Cardiac septum (tissue), 1 donor: ENCODE measurements at regions of chr1 and their contacts with region 1.

Region 1: GRCh38 chr1:46616277-46617107 is at the start of gene MOB3C:
- DNase-seq: peak; percentile 94
- total RNA-seq, gene MOB3C: 14.9 TPM

Region 2: DNA sequence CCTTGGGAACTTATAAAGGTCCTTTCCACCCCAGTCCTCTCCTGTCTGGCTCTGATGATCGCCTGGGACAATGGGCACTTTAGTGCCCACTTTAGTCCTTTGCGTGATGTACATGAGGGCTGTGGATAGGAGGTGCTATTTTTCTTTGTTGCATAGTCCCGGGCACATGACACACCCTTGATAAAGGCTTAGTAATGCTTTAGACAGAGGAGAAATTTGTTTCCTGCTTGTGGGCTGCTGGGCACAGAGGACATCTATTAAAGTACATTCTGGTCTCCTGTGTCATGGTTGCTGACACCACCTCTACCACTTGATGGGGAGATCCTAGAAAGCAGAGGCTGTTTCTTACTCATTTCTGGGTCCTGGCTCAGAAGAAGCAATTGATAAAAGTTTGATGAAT is 59.7 kb before region 1 on chr1:
- intact Hi-C with region 1: no loop called
- DNase-seq: no peak

Region 3: DNA sequence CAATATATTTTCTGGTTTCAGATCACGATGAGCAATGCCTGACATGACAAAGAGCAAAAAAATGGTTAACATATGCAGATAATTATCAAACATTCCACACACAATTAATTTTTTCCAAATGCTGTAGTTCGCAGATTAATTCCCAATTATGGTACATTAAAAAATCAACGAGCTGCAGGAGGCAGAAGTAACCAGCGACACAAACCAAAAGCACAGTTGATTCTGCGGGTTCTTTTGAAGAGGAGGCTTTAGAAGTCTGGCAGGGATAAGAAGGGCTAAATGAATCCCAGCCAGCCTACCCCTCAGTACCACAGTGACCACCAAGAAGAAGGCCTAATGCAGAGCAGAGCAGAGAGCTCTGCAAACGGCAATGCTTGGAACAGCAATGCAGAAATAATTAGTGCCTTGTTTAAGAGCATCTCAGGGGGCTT is 48.0 kb before region 1 on chr1:
- intact Hi-C with region 1: no loop called
- DNase-seq: no peak

Region 4: DNA sequence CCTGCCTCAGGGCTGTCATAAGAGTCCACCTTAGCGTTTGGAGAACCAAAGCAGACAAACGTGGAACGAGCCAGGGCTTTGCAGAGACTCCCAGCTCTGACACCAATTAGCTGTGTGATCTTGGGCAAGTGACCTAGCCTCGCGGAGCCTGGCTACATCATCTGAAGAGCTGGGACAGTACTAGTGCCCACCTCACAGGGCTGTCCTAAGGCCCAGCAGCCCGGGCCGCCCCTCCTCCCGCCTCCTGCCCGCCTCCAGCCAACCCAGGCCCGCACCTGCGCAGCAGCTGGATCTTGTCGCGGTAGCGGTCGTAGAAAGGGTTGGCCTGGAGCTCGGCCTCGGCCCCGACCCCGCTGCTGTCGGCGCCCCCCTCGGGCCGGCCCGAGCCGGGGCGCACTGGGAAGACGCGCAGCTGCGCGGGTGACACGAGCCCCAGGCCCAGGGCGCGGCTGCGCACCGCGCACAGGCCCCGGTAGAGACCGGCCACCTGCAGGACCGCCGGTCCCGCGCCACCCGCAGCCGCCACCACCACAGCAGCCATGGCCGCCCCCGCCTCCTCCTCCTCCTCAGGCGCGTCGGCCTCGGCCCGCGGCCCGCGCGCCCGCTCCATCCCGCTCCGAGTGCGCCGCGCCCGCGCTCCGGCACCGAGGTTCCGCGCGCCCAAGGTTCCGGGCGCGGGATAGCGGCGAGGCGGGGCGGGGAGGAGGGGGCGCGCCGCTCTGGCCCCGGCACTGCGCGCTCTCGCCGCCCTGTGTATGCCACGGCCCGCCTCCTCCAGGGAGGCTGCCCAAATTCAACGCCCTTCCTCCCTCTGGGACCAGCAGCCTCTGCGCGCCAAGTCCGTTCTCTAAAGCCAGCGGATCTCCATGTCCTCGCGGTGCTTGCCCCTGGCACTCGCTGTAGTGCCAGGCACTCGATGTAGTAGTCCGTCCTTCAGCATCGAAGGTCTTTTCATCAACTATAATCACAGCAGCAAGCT is 51.6 kb after region 1 on chr1 and contains the start of gene ATPAF1:
- intact Hi-C with region 1: loop called (anchors 5 kb)
- DNase-seq: peak; percentile 83
- total RNA-seq, gene ATPAF1: 190 TPM

Region 5: GRCh38 chr1:47257224-47257623 is 640.7 kb after region 1 on chr1:
- intact Hi-C with region 1: no loop called
- DNase-seq: no peak